ENCODE measurements at regions of chr3 and their contacts with region 1.

Region 1: DNA sequence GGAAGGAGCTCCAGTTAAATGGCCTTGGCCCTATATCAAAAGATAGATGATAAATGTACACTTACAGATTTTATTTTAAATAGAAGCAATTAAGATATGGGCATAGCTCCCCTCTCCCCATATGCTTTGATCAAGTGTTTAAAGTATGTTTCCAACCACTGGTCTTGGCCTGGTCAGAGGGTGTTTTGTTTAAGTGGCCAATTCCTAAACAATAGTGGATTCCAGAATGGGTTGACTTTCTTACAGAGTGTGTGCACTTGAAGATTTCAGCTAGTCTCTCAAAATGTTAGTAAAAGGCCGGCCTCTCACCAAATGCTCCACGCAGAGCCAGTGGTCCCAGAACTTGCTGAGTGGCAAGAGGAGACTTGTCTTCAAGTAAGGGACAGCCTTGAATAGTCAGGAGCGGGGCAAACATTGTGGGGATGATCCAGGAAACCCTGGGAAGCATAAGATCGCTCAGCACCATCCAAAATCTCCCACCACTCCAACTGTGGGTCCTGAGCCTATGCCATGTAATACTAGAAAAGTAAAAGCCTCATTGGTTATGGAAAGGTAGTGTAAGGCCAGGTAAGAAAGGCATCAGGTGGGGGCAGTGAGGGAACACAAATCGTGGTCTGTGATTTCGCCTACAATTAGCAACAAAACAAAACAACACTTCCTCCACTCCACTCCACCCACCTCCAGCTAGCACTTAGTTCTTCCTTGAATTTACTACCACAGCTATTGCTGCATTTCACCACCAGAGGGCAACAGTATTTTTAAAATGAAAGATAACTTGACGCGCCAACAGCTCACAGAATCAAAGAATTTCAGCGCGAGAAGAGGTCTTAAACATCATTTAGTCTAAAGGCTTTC is 4.8 kb downstream of the RARRES1 start:
- DNase-seq: peak; percentile 42
- ATAC-seq: peak; percentile 73
- H3K4me3 ChIP-seq: no peak overlapping the region
- H3K27ac ChIP-seq: no peak overlapping the region
- H3K4me1 ChIP-seq: peaks cover 13 to 27% of the 10 kb centered on the region in 2 experiments
- H3K27me3 ChIP-seq: no peaks in the 10 kb centered on the region
- CTCF ChIP-seq: peak; percentile 42 to 84 (median 72); a peak in 5 of 6 replicates
- POLR2A ChIP-seq: no peak
- RAD21 ChIP-seq: peak; percentile 60

Region 2: GRCh38 chr3:158659454-158660237 is 67.8 kb before region 1 on chr3:
- CTCF ChIA-PET with region 1: interaction called, 13 read pairs
- POLR2A ChIA-PET with region 1: no interaction called
- RAD21 ChIA-PET with region 1: interaction called in 1 of 2 experiments, 3 read pairs
- intact Hi-C with region 1: no loop called
- DNase-seq: peak; percentile 33
- ATAC-seq: peak; percentile 83
- H3K4me3 ChIP-seq: no peak overlapping the region
- H3K27ac ChIP-seq: no peak overlapping the region
- H3K4me1 ChIP-seq: no peaks in the 10 kb centered on the region
- H3K27me3 ChIP-seq: no peaks in the 10 kb centered on the region
- CTCF ChIP-seq: peak; percentile 46 to 73 (median 71); a peak in 5 of 6 replicates
- POLR2A ChIP-seq: no peak
- RAD21 ChIP-seq: peak; percentile 48